CD4-positive, alpha-beta T cell (primary cell): ENCODE measurements at regions of chr10 and their contacts with region 1.

Region 1: DNA sequence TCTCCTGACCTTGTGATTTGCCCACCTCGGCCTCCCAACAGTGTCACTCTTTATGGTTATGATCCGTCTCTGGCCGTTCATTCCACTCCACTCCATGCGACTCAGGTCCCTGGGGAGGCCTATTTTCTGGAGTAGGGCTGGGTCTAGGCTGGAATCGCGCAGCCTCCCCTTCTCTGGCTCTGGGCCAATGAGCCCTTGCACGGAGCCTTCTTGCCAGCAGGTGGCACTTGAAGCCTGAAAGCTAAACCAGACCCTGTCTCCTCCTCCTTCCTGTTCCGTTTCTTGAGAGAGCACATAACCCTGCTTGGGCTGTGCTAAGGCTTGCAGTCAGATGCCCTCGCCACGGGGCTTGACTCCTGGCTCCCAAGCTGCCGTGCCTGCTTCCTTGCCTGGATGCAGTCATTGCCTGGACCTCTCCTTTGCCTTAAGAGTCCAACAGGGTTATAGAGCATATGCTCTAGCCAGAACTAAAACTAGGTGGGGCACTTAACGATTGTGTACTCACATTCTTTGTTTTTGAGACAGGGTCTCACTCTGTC is 9.6 kb upstream of the DNAJB12 start:
- DNase-seq: peak; percentile 78 to 92 (median 82)
- ATAC-seq: peak; percentile 100
- H3K4me3 ChIP-seq: peak overlapping the region; percentile 24
- H3K4me3 Mint-ChIP-seq: no peak overlapping the region
- H3K27ac ChIP-seq: peak overlapping the region in 1 of 2 donors; percentile 54
- H3K27ac Mint-ChIP-seq: peak overlapping the region; percentile 74
- H3K4me1 ChIP-seq: peaks cover 14% of the 10 kb centered on the region
- H3K4me1 Mint-ChIP-seq: peaks cover 17% of the 10 kb centered on the region
- H3K27me3 ChIP-seq: no peaks in the 10 kb centered on the region
- H3K27me3 Mint-ChIP-seq: no peaks in the 10 kb centered on the region
- CTCF ChIP-seq: peak; percentile 80

Region 2: DNA sequence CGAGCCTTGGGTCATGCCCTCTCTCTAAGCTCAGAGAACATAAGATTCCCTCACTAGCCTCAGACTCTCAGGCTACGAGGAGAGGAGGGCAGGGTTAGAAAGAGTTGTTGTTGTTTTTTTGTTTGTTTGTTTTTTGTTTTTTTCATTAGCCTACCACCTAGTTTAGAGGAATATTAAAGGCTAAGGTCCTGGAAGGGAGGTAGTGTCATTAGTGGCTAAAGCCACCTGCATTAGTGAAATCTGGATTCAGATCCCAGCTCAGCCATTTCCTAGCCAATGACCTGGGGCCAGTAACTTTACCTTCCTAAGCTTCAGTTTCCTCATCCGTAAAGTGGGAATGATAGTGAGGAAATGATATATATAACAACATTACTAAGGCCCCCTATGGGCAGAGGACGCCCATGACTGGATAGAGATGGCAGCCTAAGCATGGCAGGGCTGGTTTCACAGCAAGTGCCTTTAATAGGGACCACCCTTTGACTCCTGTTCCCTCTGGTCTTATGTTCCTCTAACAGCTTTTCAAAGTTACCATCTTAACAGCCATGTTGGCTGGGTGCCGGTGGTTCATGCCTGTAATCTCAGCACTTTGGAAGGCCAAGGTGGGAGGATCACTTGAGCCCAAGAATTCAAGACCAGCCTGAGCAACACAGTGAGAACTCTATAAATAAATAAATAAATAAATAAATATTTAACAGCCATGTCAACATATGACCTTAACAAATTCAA is 85.5 kb before region 1 on chr10:
- CTCF ChIA-PET with region 1: no interaction called
- POLR2A ChIA-PET with region 1: no interaction called
- intact Hi-C with region 1: no loop called
- DNase-seq: no peak
- ATAC-seq: no peak
- H3K4me3 ChIP-seq: no peak overlapping the region
- H3K4me3 Mint-ChIP-seq: peak overlapping the region; percentile 47
- H3K27ac ChIP-seq: no peak overlapping the region
- H3K27ac Mint-ChIP-seq: peak overlapping the region; percentile 89
- H3K4me1 ChIP-seq: peaks cover 43% of the 10 kb centered on the region
- H3K4me1 Mint-ChIP-seq: peaks cover 42% of the 10 kb centered on the region
- H3K27me3 ChIP-seq: no peaks in the 10 kb centered on the region
- H3K27me3 Mint-ChIP-seq: no peaks in the 10 kb centered on the region
- CTCF ChIP-seq: no peak

Region 3: GRCh38 chr10:72552857-72553256 is 188.5 kb after region 1 on chr10:
- CTCF ChIA-PET with region 1: no interaction called
- POLR2A ChIA-PET with region 1: no interaction called
- intact Hi-C with region 1: loop called in 1 of 2 experiments (anchors 5 kb)
- DNase-seq: no peak
- ATAC-seq: no peak
- H3K4me3 ChIP-seq: no peak overlapping the region
- H3K4me3 Mint-ChIP-seq: no peak overlapping the region
- H3K27ac ChIP-seq: no peak overlapping the region
- H3K27ac Mint-ChIP-seq: no peak overlapping the region
- H3K4me1 ChIP-seq: no peaks in the 10 kb centered on the region
- H3K4me1 Mint-ChIP-seq: no peaks in the 10 kb centered on the region
- H3K27me3 ChIP-seq: no peaks in the 10 kb centered on the region
- H3K27me3 Mint-ChIP-seq: no peaks in the 10 kb centered on the region
- CTCF ChIP-seq: no peak

Region 4: GRCh38 chr10:72692057-72692910 is 328.0 kb after region 1 on chr10 and contains the start of gene MCU:
- CTCF ChIA-PET with region 1: no interaction called
- POLR2A ChIA-PET with region 1: interaction called, 4 read pairs
- intact Hi-C with region 1: loop called (anchors 2 to 5 kb)
- DNase-seq: peak; percentile 86 to 96 (median 92)
- ATAC-seq: peak; percentile 96
- H3K4me3 ChIP-seq: peak within 1 kb of the TSS; percentile 79
- H3K4me3 Mint-ChIP-seq: peak within 1 kb of the TSS; percentile 91
- H3K27ac ChIP-seq: peak within 1 kb of the TSS in 1 of 2 donors; percentile 24
- H3K27ac Mint-ChIP-seq: peak within 1 kb of the TSS; percentile 41
- H3K4me1 ChIP-seq: peaks cover 10% of the 10 kb centered on the region
- H3K4me1 Mint-ChIP-seq: peaks cover 43% of the 10 kb centered on the region
- H3K27me3 ChIP-seq: no peaks in the 10 kb centered on the region
- H3K27me3 Mint-ChIP-seq: no peaks in the 10 kb centered on the region
- CTCF ChIP-seq: no peak
- total RNA-seq, gene MCU: 10.3 to 12.0 TPM

Region 5: DNA sequence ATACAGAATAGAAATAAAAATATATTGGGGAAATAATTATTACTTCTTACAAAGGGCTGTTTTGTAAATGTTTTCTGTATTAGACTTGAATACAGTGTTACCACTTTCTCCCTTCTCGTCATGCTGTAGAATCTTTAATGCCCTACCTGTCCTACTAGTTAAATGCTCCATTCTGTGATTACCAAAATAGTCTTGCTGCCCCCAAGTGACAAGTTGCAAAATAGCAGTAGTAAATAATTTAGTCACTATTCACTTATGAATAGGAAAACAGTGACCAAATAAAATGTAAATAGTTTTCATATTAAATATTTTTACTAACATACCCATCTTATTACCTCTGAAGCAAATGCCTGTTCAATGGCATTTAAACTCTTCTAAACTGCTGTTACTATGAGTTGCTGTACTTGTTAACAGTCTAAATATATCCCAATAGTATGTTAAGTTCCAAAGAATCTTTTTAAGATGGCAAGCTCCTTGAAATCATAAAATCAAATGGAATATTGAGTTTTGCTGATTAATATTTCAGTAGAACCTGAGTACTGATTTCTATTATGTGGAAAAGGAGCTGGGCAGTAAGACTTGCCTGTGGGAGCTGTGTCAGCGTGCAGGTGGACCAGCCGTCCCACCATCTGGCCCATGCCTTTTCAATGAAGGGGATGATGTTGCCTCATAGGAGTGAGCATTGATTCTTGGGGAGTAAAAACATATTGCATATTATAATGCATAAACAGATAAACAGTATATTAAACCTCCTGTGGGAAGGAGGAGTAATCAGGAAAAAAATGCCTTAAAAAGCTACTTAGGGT is 511.1 kb after region 1 on chr10:
- CTCF ChIA-PET with region 1: no interaction called
- POLR2A ChIA-PET with region 1: no interaction called
- intact Hi-C with region 1: loop called (anchors 1 kb)
- DNase-seq: peak in 4 of 14 experiments; percentile 5 to 47 (median 38)
- ATAC-seq: no peak
- H3K4me3 ChIP-seq: no peak overlapping the region
- H3K4me3 Mint-ChIP-seq: no peak overlapping the region
- H3K27ac ChIP-seq: no peak overlapping the region
- H3K27ac Mint-ChIP-seq: no peak overlapping the region
- H3K4me1 ChIP-seq: no peaks in the 10 kb centered on the region
- H3K4me1 Mint-ChIP-seq: no peaks in the 10 kb centered on the region
- H3K27me3 ChIP-seq: no peaks in the 10 kb centered on the region
- H3K27me3 Mint-ChIP-seq: no peaks in the 10 kb centered on the region
- CTCF ChIP-seq: no peak

Region 6: GRCh38 chr10:73017955-73018480 is 653.7 kb after region 1 on chr10:
- CTCF ChIA-PET with region 1: no interaction called
- POLR2A ChIA-PET with region 1: no interaction called
- intact Hi-C with region 1: no loop called
- DNase-seq: no peak
- ATAC-seq: no peak
- H3K4me3 ChIP-seq: no peak overlapping the region
- H3K4me3 Mint-ChIP-seq: no peak overlapping the region
- H3K27ac ChIP-seq: no peak overlapping the region
- H3K27ac Mint-ChIP-seq: no peak overlapping the region
- H3K4me1 ChIP-seq: no peaks in the 10 kb centered on the region
- H3K4me1 Mint-ChIP-seq: no peaks in the 10 kb centered on the region
- H3K27me3 ChIP-seq: no peaks in the 10 kb centered on the region
- H3K27me3 Mint-ChIP-seq: no peaks in the 10 kb centered on the region
- CTCF ChIP-seq: no peak

Region 7: GRCh38 chr10:73159038-73159648 is 794.8 kb after region 1 on chr10:
- CTCF ChIA-PET with region 1: no interaction called
- POLR2A ChIA-PET with region 1: no interaction called
- intact Hi-C with region 1: loop called in 1 of 2 experiments (anchors 2 kb)
- DNase-seq: peak; percentile 35 to 78 (median 49)
- ATAC-seq: peak; percentile 76
- H3K4me3 ChIP-seq: no peak overlapping the region
- H3K4me3 Mint-ChIP-seq: no peak overlapping the region
- H3K27ac ChIP-seq: no peak overlapping the region
- H3K27ac Mint-ChIP-seq: no peak overlapping the region
- H3K4me1 ChIP-seq: peaks cover 6% of the 10 kb centered on the region
- H3K4me1 Mint-ChIP-seq: peaks cover 44% of the 10 kb centered on the region
- H3K27me3 ChIP-seq: no peaks in the 10 kb centered on the region
- H3K27me3 Mint-ChIP-seq: no peaks in the 10 kb centered on the region
- CTCF ChIP-seq: peak; percentile 93